ENCODE measurements at regions of chr20 and their contacts with region 1.

Region 1: DNA sequence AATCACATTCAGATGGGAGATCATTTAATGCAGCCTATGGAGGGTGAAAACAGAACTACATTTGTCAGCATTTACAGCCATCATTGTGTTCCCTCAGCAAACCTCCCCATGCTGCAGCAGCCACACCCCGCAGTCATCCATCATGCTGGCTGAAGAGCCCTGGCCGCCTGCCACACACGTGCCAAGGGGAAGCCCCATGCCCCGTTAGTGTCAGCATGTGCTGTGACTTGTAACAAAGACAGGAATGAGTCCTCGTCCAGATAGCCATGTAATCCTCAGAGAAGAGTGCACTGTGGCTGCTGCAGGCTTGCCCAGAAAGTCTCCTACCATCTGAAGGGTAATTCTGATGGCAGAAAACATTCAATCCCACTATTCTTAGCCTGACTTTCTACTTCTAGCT is 1097.8 kb downstream of the KIF16B start:
- DNase-seq: no peak
- H3K4me3 ChIP-seq: no peak overlapping the region
- H3K27ac ChIP-seq: no peak overlapping the region
- H3K4me1 ChIP-seq: no peaks in the 10 kb centered on the region
- H3K27me3 ChIP-seq: no peaks in the 10 kb centered on the region
- CTCF ChIP-seq: no peak
- POLR2A ChIP-seq: no peak

Region 2: GRCh38 chr20:15419856-15420255 is 55.6 kb before region 1 on chr20:
- intact Hi-C with region 1: loop called (anchors 2 kb)
- DNase-seq: no peak
- H3K4me3 ChIP-seq: no peak overlapping the region
- H3K27ac ChIP-seq: no peak overlapping the region
- H3K4me1 ChIP-seq: no peaks in the 10 kb centered on the region
- H3K27me3 ChIP-seq: no peaks in the 10 kb centered on the region
- CTCF ChIP-seq: no peak
- POLR2A ChIP-seq: no peak

Region 3: DNA sequence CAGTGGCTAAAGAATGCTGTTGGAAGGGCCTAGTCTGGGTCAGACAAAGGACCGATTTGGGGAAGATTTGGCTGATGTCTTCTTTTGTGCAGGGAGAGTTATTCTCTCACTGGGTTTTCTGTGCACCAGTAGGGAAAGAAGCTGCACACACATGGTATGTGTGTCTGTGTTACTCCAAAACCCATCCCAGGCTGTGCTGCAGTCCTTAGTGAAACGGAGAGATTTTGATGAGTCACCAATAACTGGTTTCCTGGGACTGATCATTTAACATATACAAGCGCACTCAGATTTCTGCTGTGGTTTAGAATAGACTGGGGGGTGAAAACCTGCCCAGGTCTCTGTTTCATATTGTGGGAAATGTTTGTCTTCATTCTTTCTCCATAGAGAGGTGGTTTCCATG is 47.9 kb after region 1 on chr20:
- intact Hi-C with region 1: no loop called
- DNase-seq: no peak
- H3K4me3 ChIP-seq: no peak overlapping the region
- H3K27ac ChIP-seq: no peak overlapping the region
- H3K4me1 ChIP-seq: no peaks in the 10 kb centered on the region
- H3K27me3 ChIP-seq: no peaks in the 10 kb centered on the region
- CTCF ChIP-seq: no peak
- POLR2A ChIP-seq: no peak

Region 4: GRCh38 chr20:15544742-15545141 is 69.3 kb after region 1 on chr20:
- intact Hi-C with region 1: loop called (anchors 2 kb)
- DNase-seq: no peak
- H3K4me3 ChIP-seq: no peak overlapping the region
- H3K27ac ChIP-seq: no peak overlapping the region
- H3K4me1 ChIP-seq: no peaks in the 10 kb centered on the region
- H3K27me3 ChIP-seq: no peaks in the 10 kb centered on the region
- CTCF ChIP-seq: no peak
- POLR2A ChIP-seq: no peak

Measured in breast epithelium (tissue), 4 donors.